ENCODE measurements at regions of chr13 and their contacts with region 1.

Region 1: GRCh38 chr13:83515268-83516015 is 366.8 kb downstream of the SLITRK1 start:
- DNase-seq: no peak
- H3K4me3 ChIP-seq: no peak overlapping the region
- H3K27ac ChIP-seq: no peak overlapping the region
- H3K4me1 ChIP-seq: no peaks in the 10 kb centered on the region
- H3K27me3 ChIP-seq: no peaks in the 10 kb centered on the region
- CTCF ChIP-seq: no peak
- EP300 ChIP-seq: no peak
- POLR2A ChIP-seq: no peak

Region 2: GRCh38 chr13:82356667-82357410 is 1158.6 kb before region 1 on chr13:
- in situ Hi-C with region 1: no loop called
- intact Hi-C with region 1: loop called (anchors 5 kb)
- DNase-seq: no peak
- H3K4me3 ChIP-seq: no peak overlapping the region
- H3K27ac ChIP-seq: no peak overlapping the region
- H3K4me1 ChIP-seq: no peaks in the 10 kb centered on the region
- H3K27me3 ChIP-seq: no peaks in the 10 kb centered on the region
- CTCF ChIP-seq: no peak
- EP300 ChIP-seq: no peak
- POLR2A ChIP-seq: no peak

Region 3: DNA sequence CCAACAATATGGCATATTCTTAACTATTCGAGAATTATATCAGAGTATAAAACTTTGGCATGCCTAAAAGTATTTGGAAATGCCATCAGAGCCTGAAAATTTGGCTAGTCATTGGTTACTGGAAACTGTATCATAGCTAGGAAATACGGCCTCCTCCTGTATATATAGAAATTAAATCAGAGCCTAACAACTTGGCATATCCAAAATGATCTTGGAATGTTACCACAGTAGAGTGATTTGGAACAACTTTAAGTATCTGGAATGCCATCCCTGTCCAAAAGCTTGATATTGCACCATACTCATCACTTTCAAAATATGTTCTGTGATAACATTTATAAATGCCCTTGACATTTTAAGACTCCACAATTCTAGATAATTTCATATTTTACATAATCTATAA is 31.0 kb after region 1 on chr13:
- in situ Hi-C with region 1: no loop called
- intact Hi-C with region 1: no loop called
- DNase-seq: no peak
- H3K4me3 ChIP-seq: no peak overlapping the region
- H3K27ac ChIP-seq: no peak overlapping the region
- H3K4me1 ChIP-seq: no peaks in the 10 kb centered on the region
- H3K27me3 ChIP-seq: no peaks in the 10 kb centered on the region
- CTCF ChIP-seq: no peak
- EP300 ChIP-seq: no peak
- POLR2A ChIP-seq: no peak

Measured in transverse colon (tissue), 4 donors.